ENCODE measurements at regions of chr19 and their contacts with region 1.

Region 1: DNA sequence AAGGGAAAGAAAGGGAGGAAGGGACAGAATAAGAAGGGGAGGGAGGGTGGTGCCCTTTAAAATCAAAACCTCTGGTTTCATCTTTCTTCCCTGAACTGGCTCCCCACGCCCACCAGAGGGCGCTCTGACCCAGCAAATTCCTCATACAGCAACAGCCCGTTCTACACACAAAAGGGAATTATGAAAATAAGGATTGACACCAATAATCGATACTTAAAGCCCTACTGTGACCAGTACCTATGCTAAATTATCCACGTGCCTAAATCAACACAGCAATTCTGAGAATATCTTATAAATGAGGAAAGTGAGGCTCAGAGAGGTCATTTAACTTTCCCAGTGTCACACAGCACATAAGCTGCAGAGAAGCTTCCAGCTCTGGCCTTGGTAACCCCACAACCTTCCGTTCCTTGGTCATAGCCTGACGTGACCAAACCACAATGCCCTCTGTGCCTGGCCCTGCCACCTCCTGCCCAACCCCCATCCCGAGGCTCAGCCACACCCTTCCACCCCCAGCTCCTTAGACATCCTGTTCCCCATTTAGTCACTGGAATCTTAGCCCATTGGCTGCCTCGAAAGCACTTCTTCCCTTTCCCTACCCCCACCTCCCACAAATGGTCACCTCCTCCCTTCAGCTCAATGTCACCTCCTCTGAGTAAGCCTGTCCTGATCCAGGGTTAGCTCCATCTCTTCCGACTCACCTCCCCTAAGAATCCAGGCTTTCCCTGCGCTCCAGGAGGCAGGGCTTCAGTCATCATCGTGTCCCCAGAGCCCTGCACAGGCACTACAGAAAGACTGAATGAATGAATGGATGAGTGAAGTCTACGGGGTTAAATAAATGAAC is 34.2 kb upstream of the PNMA8B start:
- DNase-seq: peak; percentile 77
- ATAC-seq: peak; percentile 80

Region 2: DNA sequence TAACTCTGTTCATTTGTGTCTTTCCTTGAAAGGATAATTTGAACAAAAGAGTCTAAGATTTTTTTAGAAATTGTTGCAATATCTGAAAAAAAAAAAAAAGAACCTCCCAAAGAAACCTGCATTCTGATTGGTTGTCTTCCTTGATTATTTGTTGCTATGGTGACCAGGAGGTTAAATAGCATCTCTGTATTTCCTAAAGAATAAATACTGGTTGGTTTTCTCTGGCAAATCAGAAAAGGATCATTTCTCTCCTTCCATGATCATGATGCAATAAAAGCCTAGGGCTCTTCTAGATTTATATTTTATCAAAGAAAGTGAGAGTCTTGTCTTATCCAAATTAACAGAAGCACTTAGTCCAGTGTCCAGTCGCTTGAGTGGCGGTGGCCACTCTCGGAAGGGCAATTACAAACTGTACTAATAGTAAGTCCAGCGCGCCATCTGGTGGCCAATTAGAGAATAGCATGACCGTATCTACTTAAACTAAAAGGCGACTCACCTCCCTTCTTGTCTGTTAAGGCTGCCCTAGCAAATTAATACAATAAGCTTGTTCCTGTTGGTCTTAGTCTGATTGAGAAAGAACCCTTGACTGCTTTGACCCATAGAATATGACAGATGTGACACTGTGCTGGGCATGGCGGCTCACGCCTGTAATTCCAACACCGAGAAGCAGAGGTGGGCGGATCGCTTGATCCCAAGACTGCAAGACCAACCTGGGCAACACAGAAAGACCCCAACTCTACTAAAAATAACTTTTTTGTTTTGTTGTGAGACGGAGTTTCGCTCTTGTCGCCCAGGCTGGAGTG is 12.8 kb after region 1 on chr19:
- intact Hi-C with region 1: loop called (anchors 1 kb)
- DNase-seq: peak; percentile 95
- ATAC-seq: peak; percentile 86

Region 3: GRCh38 chr19:46571531-46571930 is 41.7 kb after region 1 on chr19:
- intact Hi-C with region 1: no loop called
- DNase-seq: no peak
- ATAC-seq: no peak

Region 4: GRCh38 chr19:46661735-46662592 is 132.1 kb after region 1 on chr19:
- intact Hi-C with region 1: loop called (anchors 2 kb)
- DNase-seq: peak; percentile 91
- ATAC-seq: peak; percentile 79

Measured in Right ventricle myocardium inferior (tissue), 1 donor.